ENCODE measurements at regions of chr5 and their contacts with region 1.

Region 1: DNA sequence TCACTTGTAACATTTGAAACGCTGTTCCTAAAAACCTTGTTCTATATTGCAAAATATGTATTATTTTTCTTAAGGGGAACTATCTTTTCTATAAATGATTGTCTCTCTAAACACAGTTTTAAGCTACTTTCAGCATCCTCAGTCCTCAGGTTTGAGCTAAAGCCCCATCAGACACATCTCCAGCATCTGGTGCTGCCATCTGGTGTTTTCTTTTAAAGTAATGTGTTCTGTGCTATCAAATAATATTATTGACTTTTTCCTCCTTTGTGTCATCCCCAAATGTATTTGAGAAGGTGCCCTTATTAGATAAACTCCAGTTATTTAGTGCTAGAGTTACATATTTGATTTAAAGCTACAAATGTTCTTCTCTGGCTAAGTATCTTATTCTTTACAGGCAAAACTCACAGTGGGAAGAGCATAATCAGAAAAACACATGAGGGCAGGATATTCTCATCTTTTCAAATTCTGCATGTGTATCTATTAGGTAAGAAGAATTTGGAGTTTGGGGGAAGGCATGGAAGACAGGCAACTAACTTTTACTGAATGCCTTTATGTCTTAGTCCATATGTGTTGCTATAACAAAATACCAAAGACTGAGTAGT is 27.5 kb downstream of the ZNF474 start:
- DNase-seq: peak in 1 of 2 experiments; percentile 43
- ATAC-seq: peak in 1 of 2 experiments; percentile 81; a peak in 3 of 6 replicates
- H3K4me3 ChIP-seq: no peak overlapping the region
- H3K27ac ChIP-seq: no peak overlapping the region
- H3K4me1 ChIP-seq: peaks cover 18% of the 10 kb centered on the region; the same call in 2 of the 3 replicates
- CTCF ChIP-seq: peak; percentile 59
- EP300 ChIP-seq: no peak
- POLR2A ChIP-seq: no peak
- RAD21 ChIP-seq: peak; percentile 52 to 66; a peak in 4 of 5 replicates

Region 2: DNA sequence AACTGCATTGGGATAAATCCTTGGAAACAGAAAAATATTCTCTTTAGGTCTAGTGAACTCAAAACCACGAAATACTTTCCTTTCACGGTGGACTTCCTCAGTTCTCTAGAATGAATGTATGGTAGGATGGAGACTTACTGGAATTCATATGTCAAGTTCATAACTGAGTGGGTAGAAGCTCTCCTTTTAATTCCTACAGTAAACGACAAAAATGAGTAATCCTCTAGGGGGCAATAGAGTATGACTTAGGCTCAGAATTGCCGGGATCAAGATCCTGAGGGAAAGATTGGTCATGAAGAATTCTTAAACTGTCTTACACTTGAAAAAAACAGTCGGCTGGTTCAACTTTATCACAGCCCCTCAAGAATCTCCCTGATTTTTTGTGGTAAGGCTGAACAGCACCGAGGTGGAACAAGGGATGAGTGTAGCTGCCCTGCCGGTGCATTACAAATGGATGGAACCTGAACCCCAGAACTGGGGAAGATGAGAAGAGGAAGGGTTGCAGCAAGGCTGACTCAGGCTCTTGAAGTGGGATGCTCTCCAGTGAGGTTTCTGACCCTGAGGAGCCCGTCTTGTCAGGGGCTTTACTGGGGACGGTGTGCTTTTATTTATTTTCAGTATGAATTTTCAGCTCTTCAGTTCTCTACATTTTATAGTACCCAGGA is 64.8 kb before region 1 on chr5:
- CTCF ChIA-PET with region 1: interaction called, 10 read pairs
- POLR2A ChIA-PET with region 1: no interaction called
- DNase-seq: peak in 1 of 2 experiments; percentile 20
- ATAC-seq: peak; percentile 54 to 79; a peak in 3 of 6 replicates
- H3K4me3 ChIP-seq: no peak overlapping the region
- H3K27ac ChIP-seq: no peak overlapping the region
- H3K4me1 ChIP-seq: no peaks in the 10 kb centered on the region
- CTCF ChIP-seq: peak; percentile 47
- EP300 ChIP-seq: no peak
- POLR2A ChIP-seq: no peak
- RAD21 ChIP-seq: peak; percentile 42 to 49; a peak in 3 of 5 replicates

Region 3: GRCh38 chr5:122101636-122102285 is 55.1 kb before region 1 on chr5:
- CTCF ChIA-PET with region 1: interaction called, 24 read pairs
- POLR2A ChIA-PET with region 1: no interaction called
- DNase-seq: peak in 1 of 2 experiments; percentile 44
- ATAC-seq: peak; percentile 81 to 87; a peak in 5 of 6 replicates
- H3K4me3 ChIP-seq: no peak overlapping the region
- H3K27ac ChIP-seq: peak overlapping the region in 1 of 2 experiments; percentile 35; a peak in 3 of 6 replicates
- H3K4me1 ChIP-seq: peaks cover 10% of the 10 kb centered on the region
- CTCF ChIP-seq: peak; percentile 68
- EP300 ChIP-seq: no peak
- POLR2A ChIP-seq: no peak
- RAD21 ChIP-seq: peak; percentile 69 to 70

Region 4: GRCh38 chr5:122110987-122111386 is 45.8 kb before region 1 on chr5:
- CTCF ChIA-PET with region 1: interaction called, 12 read pairs
- POLR2A ChIA-PET with region 1: no interaction called
- DNase-seq: no peak
- ATAC-seq: no peak
- H3K4me3 ChIP-seq: no peak overlapping the region
- H3K27ac ChIP-seq: no peak overlapping the region
- H3K4me1 ChIP-seq: no peaks in the 10 kb centered on the region
- CTCF ChIP-seq: no peak
- EP300 ChIP-seq: no peak
- POLR2A ChIP-seq: no peak
- RAD21 ChIP-seq: no peak

Region 5: DNA sequence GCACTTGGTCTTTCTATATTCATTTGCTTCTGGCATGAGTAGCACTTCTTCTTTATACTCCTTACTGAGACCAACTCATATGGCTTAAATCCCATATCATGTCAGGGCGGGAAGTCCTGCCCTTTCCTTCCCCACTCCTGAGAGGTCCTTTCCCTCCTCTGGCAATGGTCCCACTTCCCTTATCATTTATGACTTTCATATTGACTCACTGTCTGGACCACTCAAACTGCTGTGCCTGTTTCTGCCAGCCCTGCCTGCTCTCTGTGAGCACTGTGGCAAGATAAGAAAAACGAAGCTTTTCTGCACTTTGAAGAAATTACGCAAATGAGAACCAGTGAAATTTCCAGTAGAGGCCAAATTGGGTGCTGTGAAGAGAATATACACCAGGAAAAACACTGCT is 30.6 kb after region 1 on chr5:
- CTCF ChIA-PET with region 1: no interaction called
- POLR2A ChIA-PET with region 1: no interaction called
- DNase-seq: no peak
- ATAC-seq: peak in 1 of 2 experiments; percentile 44; a peak in 2 of 6 replicates
- H3K4me3 ChIP-seq: no peak overlapping the region
- H3K27ac ChIP-seq: no peak overlapping the region; a peak in 1 of 6 replicates
- H3K4me1 ChIP-seq: peaks cover 15% of the 10 kb centered on the region; the same call in 2 of the 3 replicates
- CTCF ChIP-seq: no peak
- EP300 ChIP-seq: no peak
- POLR2A ChIP-seq: no peak
- RAD21 ChIP-seq: no peak

Measured in A549 (cell line).